ENCODE measurements at regions of chr6 and their contacts with region 1.

Region 1: GRCh38 chr6:3841711-3842565 is 7.2 kb upstream of the FAM50B start:
- DNase-seq: peak; percentile 30
- ATAC-seq: peak; percentile 55
- H3K4me3 ChIP-seq: no peak overlapping the region; a peak in 1 of 6 replicates
- H3K27ac ChIP-seq: peak overlapping the region; percentile 97
- H3K4me1 ChIP-seq: peaks cover 61% of the 10 kb centered on the region
- H3K27me3 ChIP-seq: no peaks in the 10 kb centered on the region
- CTCF ChIP-seq: no peak
- EP300 ChIP-seq: no peak
- POLR2A ChIP-seq: no peak
- RAD21 ChIP-seq: no peak

Region 2: GRCh38 chr6:2921520-2922115 is 920.3 kb before region 1 on chr6:
- CTCF ChIA-PET with region 1: no interaction called
- POLR2A ChIA-PET with region 1: no interaction called
- in situ Hi-C with region 1: no loop called
- intact Hi-C with region 1: no loop called
- DNase-seq: no peak
- ATAC-seq: peak; percentile 81
- H3K4me3 ChIP-seq: no peak overlapping the region
- H3K27ac ChIP-seq: no peak overlapping the region
- H3K4me1 ChIP-seq: peaks cover 38% of the 10 kb centered on the region
- H3K27me3 ChIP-seq: peaks cover 0 to 28% of the 10 kb centered on the region in 2 experiments; a peak in 3 of 5 replicates
- CTCF ChIP-seq: no peak
- EP300 ChIP-seq: no peak
- POLR2A ChIP-seq: no peak
- RAD21 ChIP-seq: no peak

Region 3: DNA sequence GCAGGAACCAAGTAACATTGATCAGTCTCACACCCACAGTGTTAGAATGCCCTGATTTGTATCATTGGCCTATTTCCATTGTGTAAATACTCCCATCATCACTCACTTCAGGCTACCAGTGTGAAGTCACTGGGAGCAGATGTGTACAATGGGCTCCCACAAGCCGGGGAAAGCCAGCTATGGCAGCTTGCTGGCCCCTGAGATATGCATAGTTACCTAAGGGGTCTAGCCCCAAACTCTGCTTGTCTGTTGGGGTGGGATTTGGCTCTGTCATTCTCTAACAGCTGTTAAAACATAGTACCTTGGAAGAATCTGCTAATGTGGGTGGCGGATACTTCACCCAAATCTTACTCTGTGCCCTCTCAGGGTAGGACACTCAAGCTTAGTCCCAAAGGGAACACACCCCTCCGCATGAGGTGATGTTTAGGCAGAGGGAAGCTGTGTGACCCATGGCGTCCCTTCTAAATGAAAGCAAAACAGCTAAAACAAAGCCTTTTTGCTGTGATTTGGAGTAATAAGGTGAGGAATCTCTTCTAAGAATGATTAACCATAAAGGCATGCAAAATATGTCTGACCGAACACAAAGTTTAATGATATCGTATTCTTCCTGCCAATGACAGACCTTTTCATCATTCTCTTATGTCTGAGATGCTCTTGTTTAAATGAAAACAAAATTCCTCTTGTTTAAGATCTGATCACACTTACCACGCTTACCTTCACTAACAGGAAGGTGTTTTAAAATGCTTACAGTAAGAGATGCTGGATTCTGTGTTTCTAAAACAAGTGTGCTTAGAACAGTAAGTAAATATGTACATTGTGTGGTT is 44.5 kb before region 1 on chr6:
- CTCF ChIA-PET with region 1: no interaction called
- POLR2A ChIA-PET with region 1: interaction called, 18 read pairs
- in situ Hi-C with region 1: no loop called
- intact Hi-C with region 1: no loop called
- DNase-seq: peak; percentile 89
- ATAC-seq: peak; percentile 83
- H3K4me3 ChIP-seq: peak overlapping the region; percentile 4 to 25 (median 17); a peak in 5 of 6 replicates
- H3K27ac ChIP-seq: peak overlapping the region; percentile 83
- H3K4me1 ChIP-seq: peaks cover 64% of the 10 kb centered on the region
- H3K27me3 ChIP-seq: no peaks in the 10 kb centered on the region
- CTCF ChIP-seq: no peak
- EP300 ChIP-seq: peak; percentile 57; a peak in 2 of 4 replicates
- POLR2A ChIP-seq: peak in 1 of 2 experiments; percentile 63; a peak in 1 of 4 replicates
- RAD21 ChIP-seq: peak; percentile 28

Region 4: GRCh38 chr6:3813150-3813780 is 28.7 kb before region 1 on chr6:
- CTCF ChIA-PET with region 1: no interaction called
- POLR2A ChIA-PET with region 1: interaction called, 31 read pairs
- in situ Hi-C with region 1: no loop called
- intact Hi-C with region 1: no loop called
- DNase-seq: peak; percentile 33
- ATAC-seq: peak; percentile 78
- H3K4me3 ChIP-seq: peak overlapping the region in 1 of 3 experiments; percentile 25; a peak in 1 of 6 replicates
- H3K27ac ChIP-seq: peak overlapping the region; percentile 15
- H3K4me1 ChIP-seq: peaks cover 30% of the 10 kb centered on the region
- H3K27me3 ChIP-seq: no peaks in the 10 kb centered on the region
- CTCF ChIP-seq: no peak; the same call in 1 of the 2 replicates
- EP300 ChIP-seq: no peak
- POLR2A ChIP-seq: no peak
- RAD21 ChIP-seq: no peak

Region 5: GRCh38 chr6:3861424-3861823 is 19.5 kb after region 1 on chr6:
- CTCF ChIA-PET with region 1: no interaction called
- POLR2A ChIA-PET with region 1: interaction called, 12 read pairs
- in situ Hi-C with region 1: no loop called
- intact Hi-C with region 1: no loop called
- DNase-seq: no peak
- ATAC-seq: peak; percentile 38; the same call in 1 of the 3 replicates
- H3K4me3 ChIP-seq: no peak overlapping the region
- H3K27ac ChIP-seq: no peak overlapping the region
- H3K4me1 ChIP-seq: peaks cover 15% of the 10 kb centered on the region
- H3K27me3 ChIP-seq: no peaks in the 10 kb centered on the region
- CTCF ChIP-seq: no peak
- EP300 ChIP-seq: no peak
- POLR2A ChIP-seq: no peak
- RAD21 ChIP-seq: no peak

Region 6: GRCh38 chr6:3887150-3887700 is 45.3 kb after region 1 on chr6:
- CTCF ChIA-PET with region 1: no interaction called
- POLR2A ChIA-PET with region 1: interaction called, 12 read pairs
- in situ Hi-C with region 1: no loop called
- intact Hi-C with region 1: no loop called
- DNase-seq: peak; percentile 57
- ATAC-seq: peak; percentile 79
- H3K4me3 ChIP-seq: no peak overlapping the region
- H3K27ac ChIP-seq: peak overlapping the region; percentile 7
- H3K4me1 ChIP-seq: peaks cover 78% of the 10 kb centered on the region
- H3K27me3 ChIP-seq: no peaks in the 10 kb centered on the region
- CTCF ChIP-seq: peak; percentile 79
- EP300 ChIP-seq: no peak
- POLR2A ChIP-seq: no peak
- RAD21 ChIP-seq: no peak; the same call in 1 of the 2 replicates

Region 7: GRCh38 chr6:4164117-4164442 is 322.1 kb after region 1 on chr6:
- CTCF ChIA-PET with region 1: no interaction called
- POLR2A ChIA-PET with region 1: no interaction called
- in situ Hi-C with region 1: no loop called
- intact Hi-C with region 1: no loop called
- DNase-seq: no peak
- ATAC-seq: peak; percentile 75
- H3K4me3 ChIP-seq: no peak overlapping the region
- H3K27ac ChIP-seq: no peak overlapping the region
- H3K4me1 ChIP-seq: peaks cover 27% of the 10 kb centered on the region
- H3K27me3 ChIP-seq: peaks cover 0 to 27% of the 10 kb centered on the region in 2 experiments; a peak in 3 of 5 replicates
- CTCF ChIP-seq: 0 out of 2 replicates have a peak, but pooled peaks have one; percentile 26
- EP300 ChIP-seq: no peak
- POLR2A ChIP-seq: no peak
- RAD21 ChIP-seq: no peak

Measured in HepG2 (cell line).